Activated T-helper 1 cell treated with anti-CD3 and anti-CD28 coated beads, Interleukin-12 subunit alpha, Interleukin-12 subunit beta, Interleukin-2, Interleukin-4 antibody, amounts not matched to agents 30 ng/mL and 10 ng/mL and 1 ng/mL, durations not matched to agents 14 hours and 24 hours and 36 hours (primary cell): ENCODE measurements at regions of chr15 and their contacts with region 1.

Region 1: GRCh38 chr15:90265271-90266060 is at the start of gene NGRN:
- DNase-seq: peak; percentile 89
- H3K4me3 Mint-ChIP-seq: peak within 1 kb of the TSS; percentile 99
- H3K27ac Mint-ChIP-seq: peak within 1 kb of the TSS; percentile 99
- H3K4me1 Mint-ChIP-seq: peaks cover 43% of the 10 kb centered on the region
- H3K27me3 Mint-ChIP-seq: no peaks in the 10 kb centered on the region
- total RNA-seq, gene NGRN: 39.0 and 39.9 TPM in 2 replicates

Region 2: DNA sequence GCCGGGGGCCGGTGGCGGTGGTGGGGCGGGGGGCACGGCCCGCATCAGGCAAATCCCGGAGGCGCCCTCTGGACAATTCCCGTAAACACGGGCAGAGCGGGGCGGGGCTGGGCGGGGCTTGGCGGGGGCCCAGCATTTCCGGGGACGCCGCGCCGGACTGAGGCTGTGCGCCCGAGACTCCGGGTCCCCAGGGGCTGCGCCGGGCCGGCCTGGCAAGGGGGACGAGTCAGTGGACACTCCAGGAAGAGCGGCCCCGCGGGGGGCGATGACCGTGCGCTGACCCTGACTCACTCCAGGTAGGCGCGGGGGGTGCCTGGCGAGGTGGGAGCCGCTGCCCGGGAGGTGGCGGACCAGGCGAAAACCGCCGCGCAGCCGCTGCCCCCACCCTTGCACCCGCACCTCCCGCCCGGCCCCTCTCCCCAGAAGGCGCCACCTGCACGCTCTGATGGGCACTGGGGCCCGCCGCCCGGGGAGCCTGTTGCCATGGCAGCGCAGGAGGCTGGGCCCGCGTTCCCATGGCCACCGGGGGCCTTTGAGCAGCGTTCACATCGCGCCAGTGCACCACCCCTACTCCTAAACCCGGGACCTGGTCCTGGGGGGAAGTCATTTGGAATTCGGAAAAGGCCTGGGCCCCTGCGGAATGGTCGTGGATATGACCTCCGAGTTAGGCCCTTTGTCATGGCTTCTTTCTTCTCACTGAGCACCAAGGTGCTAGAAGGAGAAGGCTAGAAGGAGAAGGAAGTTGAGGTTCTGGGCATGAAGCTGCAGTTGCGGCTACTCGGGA is 80.5 kb before region 1 on chr15:
- intact Hi-C with region 1: loop called (anchors 5 kb)
- DNase-seq: peak; percentile 49
- H3K4me3 Mint-ChIP-seq: peak overlapping the region; percentile 87
- H3K27ac Mint-ChIP-seq: peak overlapping the region; percentile 75
- H3K4me1 Mint-ChIP-seq: peaks cover 31% of the 10 kb centered on the region
- H3K27me3 Mint-ChIP-seq: peaks cover 5% of the 10 kb centered on the region

Region 3: DNA sequence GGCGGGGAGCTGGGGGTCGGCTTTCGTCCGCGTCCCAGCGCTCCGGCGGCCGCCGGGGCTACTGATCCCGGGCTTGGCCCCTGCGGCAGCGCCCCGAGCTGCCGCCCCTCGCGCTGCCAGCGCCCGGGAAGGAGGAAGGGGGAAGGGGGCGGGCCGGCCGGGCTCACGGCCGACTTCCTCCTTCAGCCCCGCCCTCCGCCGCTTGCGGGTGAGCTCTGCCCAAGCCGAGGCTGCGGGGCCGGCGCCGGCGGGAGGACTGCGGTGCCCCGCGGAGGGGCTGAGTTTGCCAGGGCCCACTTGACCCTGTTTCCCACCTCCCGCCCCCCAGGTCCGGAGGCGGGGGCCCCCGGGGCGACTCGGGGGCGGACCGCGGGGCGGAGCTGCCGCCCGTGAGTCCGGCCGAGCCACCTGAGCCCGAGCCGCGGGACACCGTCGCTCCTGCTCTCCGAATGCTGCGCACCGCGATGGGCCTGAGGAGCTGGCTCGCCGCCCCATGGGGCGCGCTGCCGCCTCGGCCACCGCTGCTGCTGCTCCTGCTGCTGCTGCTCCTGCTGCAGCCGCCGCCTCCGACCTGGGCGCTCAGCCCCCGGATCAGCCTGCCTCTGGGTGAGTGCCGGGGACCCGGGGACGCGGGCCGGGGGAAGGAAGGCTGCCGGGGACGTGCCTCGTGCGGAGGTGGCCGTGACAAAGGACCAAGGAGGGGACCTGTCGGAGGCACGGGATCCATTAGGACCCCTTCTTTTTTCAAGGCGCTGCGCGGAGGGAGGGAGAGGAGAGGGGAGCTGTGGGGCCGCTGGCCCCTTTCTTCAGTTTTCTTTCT is 64.1 kb before region 1 on chr15 and contains the start of gene SEMA4B:
- intact Hi-C with region 1: loop called (anchors 1 kb)
- DNase-seq: peak; percentile 75
- H3K4me3 Mint-ChIP-seq: peak within 1 kb of the TSS; percentile 92
- H3K27ac Mint-ChIP-seq: peak within 1 kb of the TSS; percentile 67
- H3K4me1 Mint-ChIP-seq: peaks cover 33% of the 10 kb centered on the region
- H3K27me3 Mint-ChIP-seq: peaks cover 5% of the 10 kb centered on the region
- total RNA-seq, gene SEMA4B: 17.5 and 18.8 TPM in 2 replicates

Region 4: GRCh38 chr15:90233376-90234095 is 31.9 kb before region 1 on chr15 and contains the start of gene CIB1:
- intact Hi-C with region 1: loop called (anchors 1 kb)
- DNase-seq: peak; percentile 98
- H3K4me3 Mint-ChIP-seq: peak within 1 kb of the TSS; percentile 93
- H3K27ac Mint-ChIP-seq: peak within 1 kb of the TSS; percentile 94
- H3K4me1 Mint-ChIP-seq: peaks cover 57% of the 10 kb centered on the region
- H3K27me3 Mint-ChIP-seq: no peaks in the 10 kb centered on the region
- total RNA-seq, gene CIB1: 144 and 145 TPM in 2 replicates

Region 5: DNA sequence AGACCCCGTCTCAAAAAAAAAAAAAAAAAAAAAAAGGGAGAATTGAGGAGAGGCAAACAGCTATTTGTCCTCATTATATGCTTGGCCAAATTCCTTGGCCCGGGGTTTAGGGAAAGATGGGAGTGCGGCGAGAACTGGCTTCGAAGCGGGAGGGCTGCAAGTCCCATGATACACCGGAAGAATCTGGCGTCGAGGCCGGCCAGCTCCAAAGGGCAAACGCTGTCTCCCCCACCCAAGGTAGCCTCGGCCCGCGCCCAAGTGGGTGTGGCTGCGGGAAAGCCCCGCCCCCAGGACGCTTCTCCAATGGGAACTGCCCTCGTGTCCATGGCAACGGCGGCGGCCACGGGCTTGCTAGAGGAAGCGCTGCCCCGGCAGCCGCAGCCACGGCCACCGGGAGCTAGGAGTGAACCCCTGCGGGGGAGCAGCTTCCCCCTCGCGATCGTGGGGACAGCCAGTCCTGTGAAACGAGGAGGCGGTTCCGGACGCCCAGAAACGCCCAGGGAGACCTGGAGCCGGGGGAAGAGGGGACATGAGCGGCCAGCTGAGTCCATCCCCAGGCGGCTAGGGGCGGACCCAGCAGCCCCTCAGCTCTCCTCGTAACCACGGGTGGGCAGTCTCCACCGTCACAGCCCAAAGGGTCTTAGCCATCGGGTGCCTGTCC is 16.1 kb before region 1 on chr15 and contains the start of gene TTLL13:
- intact Hi-C with region 1: loop called (anchors 1 kb)
- DNase-seq: peak; percentile 82
- H3K4me3 Mint-ChIP-seq: peak within 1 kb of the TSS; percentile 73
- H3K27ac Mint-ChIP-seq: peak within 1 kb of the TSS; percentile 48
- H3K4me1 Mint-ChIP-seq: peaks cover 20% of the 10 kb centered on the region
- H3K27me3 Mint-ChIP-seq: peaks cover 8% of the 10 kb centered on the region
- total RNA-seq, gene TTLL13: 0.29 and 0.65 TPM in 2 replicates

Region 6: GRCh38 chr15:90994417-90995311 is 729.2 kb after region 1 on chr15 and contains the start of gene PRC1:
- intact Hi-C with region 1: loop called (anchors 5 kb)
- DNase-seq: peak; percentile 99
- H3K4me3 Mint-ChIP-seq: peak within 1 kb of the TSS; percentile 100
- H3K27ac Mint-ChIP-seq: peak within 1 kb of the TSS; percentile 100
- H3K4me1 Mint-ChIP-seq: peaks cover 42% of the 10 kb centered on the region
- H3K27me3 Mint-ChIP-seq: no peaks in the 10 kb centered on the region
- total RNA-seq, gene PRC1: 78.4 and 86.0 TPM in 2 replicates